PC-9 (cell line): ENCODE measurements at regions of chr12 and their contacts with region 1.

Region 1: GRCh38 chr12:31728917-31729640 is at the start of gene AMN1:
- DNase-seq: peak; percentile 97 to 100
- H3K4me3 ChIP-seq: peak within 1 kb of the TSS; percentile 80
- H3K27ac ChIP-seq: peak within 1 kb of the TSS; percentile 84
- H3K4me1 ChIP-seq: peaks cover 36% of the 10 kb centered on the region
- H3K27me3 ChIP-seq: no peaks in the 10 kb centered on the region
- CTCF ChIP-seq: no peak
- total RNA-seq, gene AMN1: 6.2 and 7.4 TPM in 2 replicates

Region 2: DNA sequence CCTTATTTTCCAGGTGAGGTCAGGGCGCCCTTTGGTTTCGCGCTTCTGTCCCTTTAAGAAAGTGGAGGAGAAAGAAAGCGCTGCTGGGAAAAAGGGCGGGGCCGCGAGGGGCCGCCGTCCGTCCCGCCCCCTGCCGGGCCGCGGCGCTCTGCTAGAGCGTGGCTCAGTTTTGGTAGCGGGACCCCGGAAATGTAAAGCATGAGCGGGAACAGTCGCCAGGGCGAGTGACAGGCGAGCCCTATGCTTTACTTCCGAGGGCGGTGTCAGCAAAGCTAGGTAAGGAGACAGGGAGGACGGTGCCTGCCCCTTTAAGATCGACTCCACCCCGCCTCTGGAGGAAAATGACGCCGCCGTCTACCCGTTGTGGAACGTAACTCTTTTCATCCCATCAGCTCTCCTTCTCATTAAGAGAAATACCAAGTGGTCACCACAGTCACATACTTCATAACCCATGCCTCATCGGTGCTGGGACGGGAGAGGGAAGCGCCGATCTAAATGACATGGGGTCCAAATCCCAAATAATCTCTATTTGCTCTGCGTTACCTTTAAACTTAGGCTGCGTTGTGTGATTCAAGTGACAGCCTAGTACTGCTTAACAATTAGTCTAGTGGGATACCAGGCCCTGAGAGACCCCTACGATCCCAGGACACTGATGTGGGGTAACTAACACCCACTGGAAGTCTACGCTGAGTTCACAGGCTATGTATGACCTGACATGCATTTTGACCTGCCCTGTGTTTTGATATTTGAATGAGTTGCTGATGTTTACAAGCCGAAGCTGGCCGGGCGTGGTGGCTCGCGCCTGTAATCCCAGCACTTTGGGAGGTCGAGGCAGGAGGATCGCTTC is 69.8 kb before region 1 on chr12 and contains the start of gene ETFBKMT:
- CTCF ChIA-PET with region 1: no interaction called
- POLR2A ChIA-PET with region 1: no interaction called
- intact Hi-C with region 1: loop called (anchors 1 kb)
- DNase-seq: peak; percentile 94 to 97
- H3K4me3 ChIP-seq: peak within 1 kb of the TSS; percentile 62
- H3K27ac ChIP-seq: peak within 1 kb of the TSS; percentile 63
- H3K4me1 ChIP-seq: peaks cover 17% of the 10 kb centered on the region
- H3K27me3 ChIP-seq: no peaks in the 10 kb centered on the region
- CTCF ChIP-seq: peak; percentile 60
- total RNA-seq, gene ETFBKMT: 2.2 and 2.4 TPM in 2 replicates

Region 3: DNA sequence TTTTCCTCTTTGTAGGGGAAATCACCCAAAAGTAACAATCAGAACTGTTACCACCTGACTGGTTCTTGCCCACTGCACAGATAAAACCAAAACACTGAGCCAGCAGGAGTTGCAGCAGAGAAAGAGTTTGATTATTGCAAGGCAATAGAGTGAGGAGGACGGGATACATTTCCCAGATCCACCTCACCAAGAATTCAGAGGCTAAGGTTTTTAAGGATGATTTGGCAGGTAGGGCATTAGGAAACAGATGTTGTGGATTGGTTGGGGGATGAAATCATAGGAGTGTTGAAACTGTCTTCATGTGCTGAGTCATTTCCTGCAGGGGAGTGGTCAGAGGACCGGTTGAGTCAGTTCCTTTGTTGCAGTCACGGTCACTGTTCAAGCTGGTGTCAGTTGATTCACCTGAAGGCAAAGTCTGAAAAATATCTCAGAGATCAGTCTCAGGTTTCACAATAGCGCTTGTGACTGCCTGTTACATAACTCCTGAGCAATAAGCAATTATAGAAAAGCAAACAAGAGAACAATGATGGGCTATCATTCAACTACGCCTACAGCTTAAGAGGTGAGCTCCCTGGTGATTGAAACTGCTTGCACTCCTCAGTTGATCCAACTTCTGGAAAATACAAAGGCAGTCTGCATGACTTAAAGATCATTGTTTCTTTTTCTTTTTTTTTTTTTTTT is 20.1 kb after region 1 on chr12:
- CTCF ChIA-PET with region 1: no interaction called
- POLR2A ChIA-PET with region 1: interaction called, 5 read pairs
- intact Hi-C with region 1: loop called (anchors 1 kb)
- DNase-seq: peak; percentile 83 to 98
- H3K4me3 ChIP-seq: peak overlapping the region; percentile 5; the same call in 1 of the 2 replicates
- H3K27ac ChIP-seq: peak overlapping the region; percentile 89
- H3K4me1 ChIP-seq: peaks cover 29% of the 10 kb centered on the region
- H3K27me3 ChIP-seq: no peaks in the 10 kb centered on the region
- CTCF ChIP-seq: no peak

Region 4: GRCh38 chr12:31959161-31959700 is 230.2 kb after region 1 on chr12 and contains the start of gene RESF1:
- CTCF ChIA-PET with region 1: no interaction called
- POLR2A ChIA-PET with region 1: no interaction called
- intact Hi-C with region 1: loop called (anchors 2 kb)
- DNase-seq: peak; percentile 76 to 95
- H3K4me3 ChIP-seq: peak within 1 kb of the TSS; percentile 86
- H3K27ac ChIP-seq: peak within 1 kb of the TSS; percentile 45
- H3K4me1 ChIP-seq: peaks cover 12% of the 10 kb centered on the region
- H3K27me3 ChIP-seq: no peaks in the 10 kb centered on the region
- CTCF ChIP-seq: no peak
- total RNA-seq, gene RESF1: 25.4 and 33.8 TPM in 2 replicates

Region 5: GRCh38 chr12:33587870-33588712 is 1859.0 kb after region 1 on chr12:
- CTCF ChIA-PET with region 1: no interaction called
- POLR2A ChIA-PET with region 1: no interaction called
- intact Hi-C with region 1: loop called (anchors 5 kb)
- DNase-seq: peak; percentile 66 to 97
- H3K4me3 ChIP-seq: peak overlapping the region; percentile 38; the same call in 1 of the 2 replicates
- H3K27ac ChIP-seq: peak overlapping the region; percentile 96
- H3K4me1 ChIP-seq: peaks cover 50% of the 10 kb centered on the region
- H3K27me3 ChIP-seq: no peaks in the 10 kb centered on the region
- CTCF ChIP-seq: no peak